ENCODE measurements at regions of chr10 and their contacts with region 1.

Region 1: DNA sequence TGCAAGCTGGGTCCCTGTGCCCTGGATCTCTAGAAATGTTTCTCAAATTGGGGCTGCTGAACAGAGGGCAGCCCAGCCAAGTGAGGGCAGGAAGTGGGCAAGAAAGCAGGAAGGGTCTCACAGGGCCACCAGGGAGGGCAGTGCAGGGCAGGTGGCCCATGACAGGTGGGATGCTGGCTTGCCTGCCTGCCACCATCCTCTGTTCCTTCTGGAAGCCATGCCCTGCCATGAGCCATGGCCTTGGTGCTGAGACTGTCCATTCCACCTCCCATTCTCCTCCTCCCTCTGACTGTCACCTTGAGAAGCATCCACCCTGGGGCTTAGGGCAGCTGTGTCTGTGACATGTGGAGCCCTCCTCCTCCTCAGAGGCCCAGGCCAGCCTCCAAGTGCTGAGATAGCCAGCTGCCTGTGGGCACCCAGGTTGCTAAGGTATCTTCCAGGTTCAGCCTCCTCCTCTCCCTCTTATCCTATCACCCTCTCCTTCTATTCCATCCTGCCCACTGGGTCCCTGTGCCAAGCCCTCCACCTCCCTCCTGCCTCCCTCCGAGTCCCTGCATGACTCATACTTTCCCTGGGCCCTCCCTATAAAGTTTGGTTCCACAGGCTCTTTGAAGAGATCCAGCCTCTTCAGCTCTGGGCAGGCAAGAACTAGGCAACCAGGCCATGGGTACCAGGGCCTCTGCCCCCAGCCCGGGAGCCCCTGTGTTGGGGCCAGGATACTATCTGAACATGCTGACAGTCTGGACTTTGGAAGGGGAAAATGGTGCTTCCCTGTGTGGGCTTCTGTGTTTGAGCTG is 1.3 kb downstream of the VSIR start:
- DNase-seq: peak in 1 of 2 donors; percentile 67
- ATAC-seq: peak; percentile 21 to 28
- H3K4me3 ChIP-seq: peak overlapping the region; percentile 61 to 81 (median 69)
- H3K27ac ChIP-seq: peak overlapping the region; percentile 77 to 91 (median 86)
- H3K4me1 ChIP-seq: peaks cover 64 to 83% of the 10 kb centered on the region in 2 donors
- H3K27me3 ChIP-seq: no peaks in the 10 kb centered on the region
- CTCF ChIP-seq: no peak
- POLR2A ChIP-seq: peak; percentile 24 to 44

Region 2: GRCh38 chr10:70234668-70235447 is 1537.2 kb before region 1 on chr10:
- in situ Hi-C with region 1: no loop called
- intact Hi-C with region 1: no loop called
- DNase-seq: peak in 1 of 2 donors; percentile 24
- ATAC-seq: no peak
- H3K4me3 ChIP-seq: no peak overlapping the region
- H3K27ac ChIP-seq: peak overlapping the region; percentile 9 to 91 (median 67)
- H3K4me1 ChIP-seq: peaks cover 10 to 16% of the 10 kb centered on the region in 2 donors
- H3K27me3 ChIP-seq: no peaks in the 10 kb centered on the region
- CTCF ChIP-seq: no peak
- POLR2A ChIP-seq: no peak

Region 3: GRCh38 chr10:71378336-71379117 is 393.5 kb before region 1 on chr10:
- in situ Hi-C with region 1: no loop called
- intact Hi-C with region 1: loop called (anchors 5 kb)
- DNase-seq: no peak
- ATAC-seq: no peak
- H3K4me3 ChIP-seq: no peak overlapping the region
- H3K27ac ChIP-seq: peak overlapping the region in 1 of 4 donors; percentile 88
- H3K4me1 ChIP-seq: peaks cover 7 to 9% of the 10 kb centered on the region in 2 donors
- H3K27me3 ChIP-seq: no peaks in the 10 kb centered on the region
- CTCF ChIP-seq: no peak
- POLR2A ChIP-seq: no peak

Region 4: GRCh38 chr10:71608819-71609768 is 162.9 kb before region 1 on chr10:
- in situ Hi-C with region 1: no loop called
- intact Hi-C with region 1: loop called (anchors 5 kb)
- DNase-seq: peak; percentile 55 to 74
- ATAC-seq: peak in 1 of 2 donors; percentile 32
- H3K4me3 ChIP-seq: no peak overlapping the region
- H3K27ac ChIP-seq: no peak overlapping the region
- H3K4me1 ChIP-seq: peaks cover 18 to 19% of the 10 kb centered on the region in 2 donors
- H3K27me3 ChIP-seq: no peaks in the 10 kb centered on the region
- CTCF ChIP-seq: peak; percentile 69 to 89 (median 78)
- POLR2A ChIP-seq: no peak

Region 5: GRCh38 chr10:71713135-71714030 is 58.6 kb before region 1 on chr10:
- in situ Hi-C with region 1: no loop called
- intact Hi-C with region 1: loop called (anchors 2 kb)
- DNase-seq: peak; percentile 35 to 72
- ATAC-seq: peak; percentile 59 to 68
- H3K4me3 ChIP-seq: no peak overlapping the region
- H3K27ac ChIP-seq: peak overlapping the region; percentile 71 to 81 (median 80)
- H3K4me1 ChIP-seq: peaks cover 26 to 31% of the 10 kb centered on the region in 2 donors
- H3K27me3 ChIP-seq: no peaks in the 10 kb centered on the region
- CTCF ChIP-seq: no peak
- POLR2A ChIP-seq: peak in 1 of 2 donors; percentile 4

Region 6: GRCh38 chr10:71727738-71728737 is 44.0 kb before region 1 on chr10:
- in situ Hi-C with region 1: no loop called
- intact Hi-C with region 1: loop called (anchors 2 kb)
- DNase-seq: peak; percentile 40 to 70
- ATAC-seq: peak; percentile 63 to 69
- H3K4me3 ChIP-seq: no peak overlapping the region
- H3K27ac ChIP-seq: peak overlapping the region; percentile 36 to 67 (median 57)
- H3K4me1 ChIP-seq: peaks cover 21 to 30% of the 10 kb centered on the region in 2 donors
- H3K27me3 ChIP-seq: no peaks in the 10 kb centered on the region
- CTCF ChIP-seq: no peak
- POLR2A ChIP-seq: no peak

Region 7: GRCh38 chr10:71756311-71757191 is 15.5 kb before region 1 on chr10:
- in situ Hi-C with region 1: no loop called
- intact Hi-C with region 1: loop called (anchors 2 kb)
- DNase-seq: no peak
- ATAC-seq: peak; percentile 65 to 84
- H3K4me3 ChIP-seq: no peak overlapping the region
- H3K27ac ChIP-seq: peak overlapping the region; percentile 69 to 83 (median 71)
- H3K4me1 ChIP-seq: peaks cover 34 to 49% of the 10 kb centered on the region in 2 donors
- H3K27me3 ChIP-seq: no peaks in the 10 kb centered on the region
- CTCF ChIP-seq: no peak
- POLR2A ChIP-seq: no peak